ENCODE measurements at regions of chr16 and their contacts with region 1.

Region 1: DNA sequence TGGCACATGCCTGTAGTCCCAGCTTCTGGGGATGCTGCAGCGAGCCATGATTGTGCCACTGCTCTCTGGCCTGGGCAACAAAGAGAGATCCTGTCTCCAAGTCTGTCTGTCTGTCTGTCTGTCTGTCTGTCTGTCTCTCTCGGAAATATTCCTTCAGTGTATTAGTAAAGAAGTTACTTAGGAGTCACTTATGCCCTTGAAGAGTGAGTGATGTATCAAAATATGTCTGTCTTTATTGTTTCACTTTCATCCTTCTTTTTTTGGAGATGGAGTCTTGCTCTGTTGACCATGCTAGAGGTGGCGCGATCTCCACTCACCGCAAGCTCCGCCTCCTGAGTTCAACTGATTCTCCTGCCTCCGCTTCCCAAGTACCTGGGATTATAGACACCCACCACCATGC is 410.5 kb downstream of the WWOX start:
- DNase-seq: no peak
- ATAC-seq: no peak
- H3K4me3 ChIP-seq: no peak overlapping the region
- H3K27ac ChIP-seq: no peak overlapping the region
- H3K4me1 ChIP-seq: no peaks in the 10 kb centered on the region
- H3K27me3 ChIP-seq: no peaks in the 10 kb centered on the region
- CTCF ChIP-seq: no peak
- POLR2A ChIP-seq: no peak
- RAD21 ChIP-seq: no peak

Region 2: GRCh38 chr16:78496189-78496588 is 13.8 kb before region 1 on chr16:
- CTCF ChIA-PET with region 1: no interaction called
- POLR2A ChIA-PET with region 1: no interaction called
- RAD21 ChIA-PET with region 1: no interaction called
- intact Hi-C with region 1: loop called (anchors 1 kb)
- DNase-seq: no peak
- ATAC-seq: no peak
- H3K4me3 ChIP-seq: no peak overlapping the region
- H3K27ac ChIP-seq: no peak overlapping the region
- H3K4me1 ChIP-seq: no peaks in the 10 kb centered on the region
- H3K27me3 ChIP-seq: no peaks in the 10 kb centered on the region
- CTCF ChIP-seq: no peak
- POLR2A ChIP-seq: no peak
- RAD21 ChIP-seq: no peak

Region 3: DNA sequence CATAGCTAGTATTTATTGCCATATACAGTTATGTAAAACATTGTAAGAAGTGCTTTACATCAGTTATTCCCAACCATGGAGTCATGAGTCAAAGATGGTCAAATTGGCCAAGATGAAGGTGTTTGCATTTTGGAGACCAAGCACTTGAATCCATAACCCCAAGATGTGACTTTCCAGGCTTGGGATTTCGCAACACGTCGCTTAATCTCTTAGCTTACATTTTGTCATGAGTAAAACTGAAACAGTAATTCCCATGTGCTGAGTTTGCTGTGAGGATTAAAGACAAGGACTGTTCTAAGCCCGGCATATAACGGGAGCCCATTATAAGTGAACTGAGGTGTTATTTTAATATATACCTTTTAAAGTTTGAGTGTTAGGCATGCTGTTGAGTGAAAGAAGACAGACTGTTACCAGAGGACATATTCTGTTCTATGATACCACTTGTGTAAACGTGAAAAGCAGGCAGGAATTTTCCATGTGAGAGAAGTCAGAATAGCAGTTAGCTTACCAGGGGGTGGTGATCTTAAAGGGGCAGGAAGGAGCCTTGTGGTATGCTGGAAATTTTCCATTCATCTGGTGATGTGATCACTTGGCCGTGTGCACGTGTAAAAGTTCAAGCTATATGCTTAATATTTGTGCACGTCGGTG is 74.4 kb after region 1 on chr16:
- CTCF ChIA-PET with region 1: no interaction called
- POLR2A ChIA-PET with region 1: no interaction called
- RAD21 ChIA-PET with region 1: no interaction called
- intact Hi-C with region 1: no loop called
- DNase-seq: no peak
- ATAC-seq: no peak
- H3K4me3 ChIP-seq: no peak overlapping the region
- H3K27ac ChIP-seq: no peak overlapping the region
- H3K4me1 ChIP-seq: no peaks in the 10 kb centered on the region
- H3K27me3 ChIP-seq: no peaks in the 10 kb centered on the region
- CTCF ChIP-seq: no peak
- POLR2A ChIP-seq: no peak
- RAD21 ChIP-seq: no peak